ENCODE measurements at regions of chr2 and their contacts with region 1.

Region 1: DNA sequence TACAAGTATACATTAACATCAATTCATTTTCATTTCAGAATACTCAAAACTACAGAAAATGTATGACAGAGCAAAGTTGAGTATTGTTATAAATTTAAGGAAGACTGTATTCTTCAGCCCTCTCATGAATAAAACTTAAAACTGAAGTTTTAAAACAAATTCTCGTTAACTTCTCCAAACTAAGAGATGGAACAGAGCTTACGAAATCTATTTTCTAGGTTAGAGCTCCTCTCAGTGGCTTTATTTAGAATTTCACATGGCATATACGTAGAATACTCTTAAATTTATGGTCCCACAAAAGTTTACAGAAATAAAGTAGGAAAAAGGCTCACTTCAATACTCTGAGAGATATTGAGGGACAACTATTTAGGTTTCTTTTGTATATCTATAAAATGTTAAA is 612.1 kb downstream of the KCNJ3 start:
- DNase-seq: no peak
- H3K4me3 ChIP-seq: no peak overlapping the region
- H3K27ac ChIP-seq: no peak overlapping the region
- H3K4me1 ChIP-seq: no peaks in the 10 kb centered on the region
- H3K27me3 ChIP-seq: no peaks in the 10 kb centered on the region
- CTCF ChIP-seq: peak in 5 of 6 experiments; percentile 18 to 50 (median 48)
- POLR2A ChIP-seq: no peak

Region 2: DNA sequence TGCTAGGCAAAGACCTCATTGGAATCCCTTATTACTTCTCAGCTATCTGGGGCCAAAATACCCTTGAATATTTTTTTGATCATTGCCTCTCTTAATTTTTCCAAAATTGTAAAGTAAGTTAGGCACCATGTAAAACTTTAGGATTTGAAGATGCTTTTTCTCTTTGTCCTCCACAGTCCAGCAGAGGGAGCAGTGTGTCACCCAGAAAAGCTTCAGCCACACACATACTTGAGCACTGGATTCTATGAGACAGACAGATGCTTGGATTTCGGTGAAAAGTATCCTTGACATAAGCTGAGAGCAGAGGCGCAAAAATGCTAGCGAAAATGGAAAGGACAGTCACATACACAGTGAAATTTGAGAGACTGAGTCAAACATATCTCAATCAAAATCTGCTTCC is 686.8 kb before region 1 on chr2:
- intact Hi-C with region 1: loop called in 1 of 2 experiments (anchors 10 kb)
- DNase-seq: peak in 6 of 7 donors; percentile 11 to 63 (median 32)
- H3K4me3 ChIP-seq: no peak overlapping the region
- H3K27ac ChIP-seq: no peak overlapping the region
- H3K4me1 ChIP-seq: no peaks in the 10 kb centered on the region
- H3K27me3 ChIP-seq: no peaks in the 10 kb centered on the region
- CTCF ChIP-seq: peak; percentile 32 to 63 (median 50)
- POLR2A ChIP-seq: no peak

Region 3: DNA sequence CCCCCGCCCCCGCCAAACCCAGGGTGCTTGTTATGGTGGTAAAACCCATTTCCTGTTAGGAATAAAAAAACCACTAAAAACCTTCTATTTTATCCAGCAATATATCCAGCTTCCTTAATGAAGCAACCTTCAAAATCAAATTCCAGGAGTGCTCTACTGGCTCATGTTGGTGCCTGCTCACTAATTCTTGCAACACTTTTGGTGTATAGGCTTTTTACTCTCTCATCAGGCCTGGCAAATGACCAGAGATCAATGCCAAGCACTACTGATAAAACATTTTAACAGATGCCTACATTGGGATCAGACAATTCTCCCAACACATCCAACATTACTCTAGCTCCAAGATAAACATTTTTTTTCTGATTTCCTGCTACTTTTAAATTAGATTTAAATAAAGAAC is 299.7 kb before region 1 on chr2:
- intact Hi-C with region 1: no loop called
- DNase-seq: no peak
- H3K4me3 ChIP-seq: no peak overlapping the region
- H3K27ac ChIP-seq: no peak overlapping the region
- H3K4me1 ChIP-seq: no peaks in the 10 kb centered on the region
- H3K27me3 ChIP-seq: no peaks in the 10 kb centered on the region
- CTCF ChIP-seq: no peak
- POLR2A ChIP-seq: no peak

Region 4: GRCh38 chr2:155266583-155266982 is 44.0 kb before region 1 on chr2:
- intact Hi-C with region 1: no loop called
- DNase-seq: no peak
- H3K4me3 ChIP-seq: no peak overlapping the region
- H3K27ac ChIP-seq: no peak overlapping the region
- H3K4me1 ChIP-seq: no peaks in the 10 kb centered on the region
- H3K27me3 ChIP-seq: no peaks in the 10 kb centered on the region
- CTCF ChIP-seq: no peak
- POLR2A ChIP-seq: no peak

Measured in adrenal gland (tissue), 19 donors.